ENCODE measurements at regions of chr1 and their contacts with region 1.

Region 1: GRCh38 chr1:178749581-178750166 is 24.6 kb downstream of the RALGPS2 start:
- DNase-seq: no peak

Region 2: GRCh38 chr1:178477841-178478240 is 271.8 kb before region 1 on chr1:
- intact Hi-C with region 1: loop called in 1 of 2 experiments (anchors 5 kb)
- DNase-seq: no peak

Region 3: DNA sequence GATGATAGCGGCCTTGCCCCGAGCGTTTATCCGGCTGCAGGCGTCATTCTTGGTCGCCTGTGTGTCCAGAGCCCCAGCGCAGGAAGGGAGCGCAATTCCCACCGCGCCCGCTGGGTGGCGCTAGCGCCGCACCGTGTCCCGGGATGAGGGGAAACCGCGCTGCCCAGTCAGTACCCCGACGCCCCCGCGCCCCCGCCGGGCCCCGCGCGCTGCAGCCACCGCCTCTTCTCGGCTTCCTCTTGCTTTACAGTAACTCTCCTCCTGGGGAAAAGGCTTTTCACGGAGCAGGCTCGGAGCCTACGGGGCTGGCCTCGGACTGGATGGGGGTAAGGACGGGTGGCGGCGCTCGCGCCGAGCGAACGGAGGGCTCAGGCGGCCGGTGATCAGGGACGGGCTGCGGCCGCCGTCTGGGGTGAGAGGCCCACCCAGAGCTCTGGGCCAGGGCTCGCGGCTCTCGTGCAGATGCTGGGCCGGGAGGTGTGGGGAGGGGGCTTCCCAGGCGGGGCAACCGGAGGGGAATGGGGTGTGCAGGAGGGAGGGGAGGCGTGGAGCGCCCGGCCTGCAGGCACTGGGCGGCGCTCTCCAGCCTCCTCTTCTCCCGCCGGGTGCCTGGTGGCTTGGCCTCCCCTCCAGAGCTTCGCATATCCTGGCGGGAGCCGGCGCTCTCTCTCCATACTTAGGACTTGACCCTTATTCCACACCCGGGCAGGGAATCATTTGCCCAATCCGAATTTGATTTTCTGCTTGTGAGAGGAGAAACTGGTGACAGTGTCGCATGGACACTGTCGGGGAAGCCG is 206.9 kb before region 1 on chr1:
- intact Hi-C with region 1: loop called (anchors 2 to 5 kb)
- DNase-seq: peak; percentile 97

Region 4: DNA sequence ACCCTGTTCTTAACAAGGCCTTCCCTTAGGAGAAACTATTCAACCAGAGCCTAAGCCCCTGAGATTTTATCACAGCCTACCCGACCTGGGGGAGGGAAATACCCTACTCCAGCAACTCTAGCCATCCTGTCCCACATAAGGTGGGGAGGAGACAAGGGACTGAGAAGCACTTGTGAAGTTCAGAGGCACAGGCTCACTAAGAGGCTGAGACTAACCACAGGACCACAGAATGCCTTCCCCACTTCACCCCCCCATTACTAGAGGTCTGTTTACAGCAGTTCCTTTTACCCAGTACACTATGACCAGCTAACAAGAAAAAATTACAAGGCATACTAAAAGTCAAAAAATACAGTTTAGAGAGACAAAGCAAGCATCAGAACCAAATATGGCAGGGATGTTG is 149.9 kb before region 1 on chr1:
- intact Hi-C with region 1: no loop called
- DNase-seq: no peak

Region 5: GRCh38 chr1:178818416-178818815 is 68.7 kb after region 1 on chr1:
- intact Hi-C with region 1: no loop called
- DNase-seq: no peak